ENCODE measurements at regions of chr12 and their contacts with region 1.

Region 1: GRCh38 chr12:55738123-55739024 is 4.5 kb upstream of the GDF11 start:
- DNase-seq: peak; percentile 56 to 79
- ATAC-seq: peak; percentile 52 to 81
- H3K4me3 ChIP-seq: peak overlapping the region; percentile 45
- H3K27ac ChIP-seq: peak overlapping the region; percentile 40 to 72; a peak in 5 of 6 replicates
- H3K4me1 ChIP-seq: peaks cover 11% of the 10 kb centered on the region; the same call in 2 of the 3 replicates
- CTCF ChIP-seq: peak; percentile 95
- EP300 ChIP-seq: no peak
- POLR2A ChIP-seq: no peak
- RAD21 ChIP-seq: peak; percentile 91 to 96

Region 2: DNA sequence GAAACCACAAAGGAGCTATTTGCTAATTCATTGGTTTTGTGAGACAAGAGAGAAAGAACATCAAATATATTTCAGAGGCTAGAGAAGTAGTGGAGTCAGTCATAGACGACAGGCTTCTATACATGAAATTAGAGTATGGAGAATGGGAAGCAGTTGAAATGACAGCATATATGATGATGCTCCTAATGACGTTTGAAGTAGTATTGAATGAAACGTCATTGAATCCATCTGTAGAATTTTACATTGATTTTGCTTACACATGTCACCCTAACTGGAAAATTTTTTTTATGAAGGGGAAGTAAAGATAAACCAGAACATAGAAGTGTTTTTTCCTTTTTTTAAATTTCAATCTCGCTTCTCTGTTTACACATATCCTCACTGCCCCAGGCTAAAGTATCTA is 509.0 kb before region 1 on chr12:
- CTCF ChIA-PET with region 1: no interaction called
- POLR2A ChIA-PET with region 1: no interaction called
- DNase-seq: no peak
- ATAC-seq: no peak
- H3K4me3 ChIP-seq: no peak overlapping the region
- H3K27ac ChIP-seq: no peak overlapping the region
- H3K4me1 ChIP-seq: no peaks in the 10 kb centered on the region
- CTCF ChIP-seq: no peak
- EP300 ChIP-seq: no peak
- POLR2A ChIP-seq: no peak
- RAD21 ChIP-seq: no peak

Region 3: DNA sequence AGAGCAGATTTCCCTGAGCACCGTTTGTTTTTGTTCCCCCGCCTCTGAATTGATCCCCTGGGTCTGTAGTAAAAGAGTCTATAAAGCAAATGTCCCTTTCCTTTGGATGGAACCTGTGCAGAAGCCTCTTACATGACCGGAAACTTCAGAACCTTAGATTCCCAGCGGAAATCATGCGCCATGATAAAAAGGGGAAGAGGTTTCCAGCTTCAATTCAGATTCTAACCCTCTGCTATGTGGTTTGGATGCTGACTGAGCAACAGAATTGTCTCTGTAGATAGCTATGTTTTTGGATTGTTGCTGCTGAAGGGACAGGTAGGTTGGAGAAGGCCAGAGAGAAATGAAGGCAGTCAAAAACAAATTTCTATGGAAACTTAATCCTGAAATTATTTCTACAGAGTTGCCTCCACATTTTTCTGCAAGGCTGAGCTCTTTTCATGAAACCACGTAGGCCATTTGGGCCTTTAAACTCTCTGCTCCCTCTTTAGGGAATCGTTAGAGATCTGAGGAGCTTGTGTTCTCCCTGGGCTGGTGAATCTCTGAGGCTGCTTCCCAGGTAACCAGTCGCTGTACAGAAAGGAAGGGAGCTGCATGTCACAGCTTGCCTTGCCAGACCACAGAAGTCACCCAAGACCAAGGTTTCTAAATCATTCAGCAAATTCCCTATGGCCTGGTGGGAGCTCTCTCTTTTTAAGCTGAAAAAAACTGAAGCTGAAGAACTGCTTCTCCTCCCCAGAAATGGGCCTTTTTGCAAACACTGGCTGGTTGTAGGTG is 130.4 kb before region 1 on chr12:
- CTCF ChIA-PET with region 1: no interaction called
- POLR2A ChIA-PET with region 1: no interaction called
- DNase-seq: no peak
- ATAC-seq: no peak
- H3K4me3 ChIP-seq: no peak overlapping the region
- H3K27ac ChIP-seq: no peak overlapping the region
- H3K4me1 ChIP-seq: no peaks in the 10 kb centered on the region
- CTCF ChIP-seq: no peak
- EP300 ChIP-seq: no peak
- POLR2A ChIP-seq: no peak
- RAD21 ChIP-seq: no peak

Region 4: GRCh38 chr12:55642669-55643068 is 95.7 kb before region 1 on chr12:
- CTCF ChIA-PET with region 1: no interaction called
- POLR2A ChIA-PET with region 1: no interaction called
- DNase-seq: no peak
- ATAC-seq: no peak
- H3K4me3 ChIP-seq: no peak overlapping the region
- H3K27ac ChIP-seq: no peak overlapping the region
- H3K4me1 ChIP-seq: no peaks in the 10 kb centered on the region
- CTCF ChIP-seq: no peak
- EP300 ChIP-seq: no peak
- POLR2A ChIP-seq: no peak
- RAD21 ChIP-seq: no peak

Region 5: DNA sequence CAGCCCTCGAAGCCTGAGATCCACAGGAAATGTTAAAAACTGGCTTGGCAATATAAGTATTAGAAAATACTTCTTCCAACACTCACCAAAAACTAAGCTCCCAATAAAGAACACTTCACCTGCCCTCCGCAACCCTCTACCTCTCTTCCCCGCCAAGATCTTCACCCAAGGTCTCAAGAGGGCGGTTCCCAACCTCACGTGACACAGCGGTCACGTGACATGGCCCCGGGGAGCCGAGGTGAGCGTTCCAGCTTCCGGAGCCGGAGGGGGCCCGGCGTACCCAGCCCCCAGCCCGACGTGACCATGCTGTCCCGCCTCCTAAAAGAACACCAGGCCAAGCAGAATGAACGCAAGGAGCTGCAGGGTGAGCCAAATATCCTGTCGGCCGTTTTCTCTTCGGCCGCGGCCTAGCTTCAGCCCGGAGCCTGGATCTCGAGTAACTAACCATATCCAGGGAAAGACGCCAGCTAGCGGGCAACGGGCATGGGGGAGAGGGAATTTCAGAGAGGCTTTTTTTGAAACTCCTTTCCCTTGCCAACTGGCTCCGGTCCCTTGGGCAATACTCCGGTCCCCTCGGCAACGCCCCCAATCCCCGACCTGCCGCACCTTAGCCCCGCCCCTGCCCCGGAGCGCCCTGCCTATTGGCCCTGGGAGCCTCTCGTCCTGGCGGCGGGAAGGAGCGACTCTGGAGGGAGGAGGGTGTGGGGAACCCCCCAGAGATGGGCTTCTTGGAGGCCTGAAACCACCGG is 22.4 kb before region 1 on chr12 and contains the start of gene BLOC1S1:
- CTCF ChIA-PET with region 1: interaction called, 139 read pairs
- POLR2A ChIA-PET with region 1: no interaction called
- DNase-seq: peak; percentile 95 to 98
- ATAC-seq: peak; percentile 78 to 88
- H3K4me3 ChIP-seq: peak within 1 kb of the TSS; percentile 86
- H3K27ac ChIP-seq: peak within 1 kb of the TSS; percentile 96 to 97
- H3K4me1 ChIP-seq: peaks cover 47% of the 10 kb centered on the region
- CTCF ChIP-seq: no peak
- EP300 ChIP-seq: no peak
- POLR2A ChIP-seq: peak; percentile 37; the same call in 1 of the 2 replicates
- RAD21 ChIP-seq: no peak
- polyA plus RNA-seq, gene BLOC1S1: 112 and 115 TPM in 2 replicates

Region 6: GRCh38 chr12:55797068-55797467 is 58.7 kb after region 1 on chr12:
- CTCF ChIA-PET with region 1: interaction called, 114 read pairs
- POLR2A ChIA-PET with region 1: no interaction called
- DNase-seq: peak; percentile 62 to 65
- ATAC-seq: peak in 1 of 2 experiments; percentile 87; a peak in 3 of 6 replicates
- H3K4me3 ChIP-seq: no peak overlapping the region
- H3K27ac ChIP-seq: no peak overlapping the region
- H3K4me1 ChIP-seq: peaks cover 6% of the 10 kb centered on the region; the same call in 1 of the 3 replicates
- CTCF ChIP-seq: peak; percentile 51
- EP300 ChIP-seq: no peak
- POLR2A ChIP-seq: no peak
- RAD21 ChIP-seq: peak; percentile 42 to 64; a peak in 4 of 5 replicates

Region 7: DNA sequence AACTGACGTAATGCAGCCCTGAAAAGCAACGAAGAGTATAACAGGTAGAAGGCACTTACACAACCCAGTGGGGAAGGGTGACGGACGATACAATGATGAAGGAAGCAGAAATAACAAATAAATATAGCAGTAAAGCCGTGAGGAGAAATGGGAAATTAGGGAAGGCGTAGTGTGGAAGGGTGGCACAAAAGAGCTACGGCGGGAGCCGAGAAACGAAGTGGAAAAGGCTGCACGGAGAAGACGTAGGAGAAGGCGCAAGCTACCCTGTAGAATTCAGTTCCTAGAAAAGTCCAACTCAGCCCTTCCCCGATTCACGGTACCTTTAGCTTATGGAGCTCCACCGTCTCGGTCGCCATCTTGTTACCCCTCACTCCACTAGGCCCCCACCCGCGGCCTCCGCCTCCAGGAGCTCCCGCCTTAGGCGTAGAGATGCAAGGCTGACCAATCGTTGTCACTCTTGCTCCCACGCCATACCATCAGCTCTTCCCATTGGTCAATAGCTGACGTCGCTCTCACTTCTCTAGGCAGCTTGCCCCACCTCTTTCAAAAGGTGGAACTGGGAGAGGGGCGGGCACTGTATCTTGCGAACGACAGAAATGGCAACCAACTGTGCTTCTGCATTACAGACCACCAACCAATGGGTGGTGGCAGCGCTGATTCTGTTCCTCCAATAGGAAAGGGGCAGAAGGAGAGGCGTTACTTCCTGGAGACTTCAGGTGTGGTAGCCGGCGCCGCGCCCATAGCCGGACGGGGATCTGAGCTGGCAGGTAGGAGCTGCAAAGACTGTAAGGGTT is 79.2 kb after region 1 on chr12 and contains the starts of genes ORMDL2 and SARNP:
- CTCF ChIA-PET with region 1: interaction called, 25 read pairs
- POLR2A ChIA-PET with region 1: interaction called, 10 read pairs
- DNase-seq: peak; percentile 99 to 100
- ATAC-seq: peak; percentile 97
- H3K4me3 ChIP-seq: peak within 1 kb of the TSS; percentile 90
- H3K27ac ChIP-seq: peak within 1 kb of the TSS; percentile 95 to 96
- H3K4me1 ChIP-seq: peaks cover 26% of the 10 kb centered on the region
- CTCF ChIP-seq: no peak
- EP300 ChIP-seq: no peak
- POLR2A ChIP-seq: peak; percentile 83
- RAD21 ChIP-seq: no peak
- polyA plus RNA-seq, gene ORMDL2: 93.6 and 138 TPM in 2 replicates
- polyA plus RNA-seq, gene SARNP: 164 and 198 TPM in 2 replicates

Region 8: DNA sequence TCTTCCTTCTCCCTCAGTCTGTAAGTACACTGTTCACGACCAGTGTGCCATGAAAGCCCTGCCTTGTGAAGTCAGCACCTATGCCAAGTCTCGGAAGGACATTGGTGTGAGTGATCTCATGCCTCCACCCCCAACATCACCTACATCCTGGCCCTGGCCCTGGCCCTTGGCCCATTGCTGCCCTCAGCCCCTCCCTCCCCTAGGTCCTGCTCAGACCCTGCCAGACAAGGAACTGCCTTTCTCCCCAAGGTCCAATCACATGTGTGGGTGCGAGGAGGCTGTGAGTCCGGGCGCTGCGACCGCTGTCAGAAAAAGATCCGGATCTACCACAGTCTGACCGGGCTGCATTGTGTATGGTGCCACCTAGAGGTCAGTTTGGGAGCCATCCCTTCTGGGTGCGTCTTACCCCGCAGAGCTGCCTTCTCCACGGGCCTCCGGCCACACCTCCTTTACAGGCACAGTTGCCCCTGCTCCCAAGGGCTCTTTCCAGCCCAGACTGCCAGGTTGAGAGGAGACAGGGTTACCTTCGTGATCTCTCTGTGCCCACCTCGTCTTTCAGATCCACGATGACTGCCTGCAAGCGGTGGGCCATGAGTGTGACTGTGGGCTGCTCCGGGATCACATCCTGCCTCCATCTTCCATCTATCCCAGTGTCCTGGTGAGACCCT is 201.8 kb after region 1 on chr12:
- CTCF ChIA-PET with region 1: interaction called, 36 read pairs
- POLR2A ChIA-PET with region 1: no interaction called
- DNase-seq: peak; percentile 87
- ATAC-seq: peak; percentile 96 to 100
- H3K4me3 ChIP-seq: no peak overlapping the region
- H3K27ac ChIP-seq: peak overlapping the region in 1 of 2 experiments; percentile 62; a peak in 3 of 6 replicates
- H3K4me1 ChIP-seq: peaks cover 8% of the 10 kb centered on the region; the same call in 1 of the 3 replicates
- CTCF ChIP-seq: peak; percentile 92
- EP300 ChIP-seq: no peak
- POLR2A ChIP-seq: no peak
- RAD21 ChIP-seq: peak; percentile 82 to 85

Region 9: GRCh38 chr12:56041552-56042429 is 303.4 kb after region 1 on chr12 and contains the start of gene RPS26:
- CTCF ChIA-PET with region 1: interaction called, 11 read pairs
- POLR2A ChIA-PET with region 1: no interaction called
- DNase-seq: peak; percentile 91 to 100
- ATAC-seq: peak; percentile 96 to 97
- H3K4me3 ChIP-seq: peak within 1 kb of the TSS; percentile 74
- H3K27ac ChIP-seq: peak within 1 kb of the TSS; percentile 90 to 99
- H3K4me1 ChIP-seq: peaks cover 16% of the 10 kb centered on the region
- CTCF ChIP-seq: peak; percentile 71
- EP300 ChIP-seq: no peak
- POLR2A ChIP-seq: peak; percentile 99
- RAD21 ChIP-seq: peak; percentile 70 to 83
- polyA plus RNA-seq, gene RPS26: 513 and 524 TPM in 2 replicates

Measured in A549 (cell line).